Activated T-helper 1 cell treated with anti-CD3 and anti-CD28 coated beads, Interleukin-12 subunit alpha, Interleukin-12 subunit beta, Interleukin-2, Interleukin-4 antibody, amounts not matched to agents 30 ng/mL and 10 ng/mL and 1 ng/mL, durations not matched to agents 14 hours and 24 hours and 36 hours (primary cell): ENCODE measurements at regions of chr4 and their contacts with region 1.

Region 1: GRCh38 chr4:152779513-152780266 is at the starts of genes ARFIP1 and TIGD4:
- DNase-seq: peak; percentile 96
- H3K4me3 Mint-ChIP-seq: peak within 1 kb of the TSS; percentile 99
- H3K27ac Mint-ChIP-seq: peak within 1 kb of the TSS; percentile 94
- H3K4me1 Mint-ChIP-seq: peaks cover 44% of the 10 kb centered on the region
- H3K27me3 Mint-ChIP-seq: peaks cover 25% of the 10 kb centered on the region
- total RNA-seq, gene ARFIP1: 18.6 and 23.2 TPM in 2 replicates
- total RNA-seq, gene TIGD4: 0.24 and 0.57 TPM in 2 replicates

Region 2: GRCh38 chr4:151760712-151761527 is 1018.8 kb before region 1 on chr4 and contains the start of gene GATB:
- intact Hi-C with region 1: loop called (anchors 1 kb)
- DNase-seq: peak; percentile 88
- H3K4me3 Mint-ChIP-seq: peak within 1 kb of the TSS; percentile 98
- H3K27ac Mint-ChIP-seq: peak within 1 kb of the TSS; percentile 97
- H3K4me1 Mint-ChIP-seq: peaks cover 21% of the 10 kb centered on the region
- H3K27me3 Mint-ChIP-seq: peaks cover 6% of the 10 kb centered on the region
- total RNA-seq, gene GATB: 16.1 and 20.0 TPM in 2 replicates

Region 3: GRCh38 chr4:152485726-152486276 is 293.9 kb before region 1 on chr4:
- intact Hi-C with region 1: loop called (anchors 2 kb)
- DNase-seq: peak; percentile 60
- H3K4me3 Mint-ChIP-seq: peak overlapping the region; percentile 40
- H3K27ac Mint-ChIP-seq: peak overlapping the region; percentile 77
- H3K4me1 Mint-ChIP-seq: peaks cover 48% of the 10 kb centered on the region
- H3K27me3 Mint-ChIP-seq: no peaks in the 10 kb centered on the region

Region 4: DNA sequence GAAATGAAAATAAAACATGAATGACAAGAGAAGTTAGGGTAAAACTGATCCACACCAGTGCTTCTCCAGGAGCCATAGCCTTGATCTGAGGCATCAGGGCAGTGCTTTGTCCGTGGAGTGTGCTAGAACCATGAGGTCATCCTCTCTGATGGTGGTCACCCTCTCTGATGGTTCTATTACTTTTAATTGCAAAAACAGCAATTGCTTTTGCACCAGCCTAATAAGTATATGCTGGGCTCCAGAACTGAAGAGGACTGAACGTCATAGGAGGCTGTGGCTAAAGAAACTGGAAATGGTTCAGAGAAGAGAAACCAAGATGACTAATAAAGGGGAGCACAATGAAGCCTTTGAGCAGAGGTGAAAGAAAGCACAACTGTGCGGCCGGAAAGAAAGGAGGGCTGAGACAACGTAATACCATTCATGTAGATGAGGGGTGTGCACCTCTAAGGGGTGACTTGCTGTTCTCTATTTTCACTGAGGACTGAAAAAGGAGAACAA is 82.9 kb before region 1 on chr4:
- intact Hi-C with region 1: loop called (anchors 5 kb)
- DNase-seq: peak; percentile 64
- H3K4me3 Mint-ChIP-seq: no peak overlapping the region
- H3K27ac Mint-ChIP-seq: no peak overlapping the region
- H3K4me1 Mint-ChIP-seq: peaks cover 23% of the 10 kb centered on the region
- H3K27me3 Mint-ChIP-seq: peaks cover 13% of the 10 kb centered on the region

Region 5: GRCh38 chr4:152850377-152850776 is 70.7 kb after region 1 on chr4:
- intact Hi-C with region 1: loop called (anchors 2 kb)
- DNase-seq: no peak
- H3K4me3 Mint-ChIP-seq: no peak overlapping the region
- H3K27ac Mint-ChIP-seq: no peak overlapping the region
- H3K4me1 Mint-ChIP-seq: peaks cover 23% of the 10 kb centered on the region
- H3K27me3 Mint-ChIP-seq: no peaks in the 10 kb centered on the region

Region 6: DNA sequence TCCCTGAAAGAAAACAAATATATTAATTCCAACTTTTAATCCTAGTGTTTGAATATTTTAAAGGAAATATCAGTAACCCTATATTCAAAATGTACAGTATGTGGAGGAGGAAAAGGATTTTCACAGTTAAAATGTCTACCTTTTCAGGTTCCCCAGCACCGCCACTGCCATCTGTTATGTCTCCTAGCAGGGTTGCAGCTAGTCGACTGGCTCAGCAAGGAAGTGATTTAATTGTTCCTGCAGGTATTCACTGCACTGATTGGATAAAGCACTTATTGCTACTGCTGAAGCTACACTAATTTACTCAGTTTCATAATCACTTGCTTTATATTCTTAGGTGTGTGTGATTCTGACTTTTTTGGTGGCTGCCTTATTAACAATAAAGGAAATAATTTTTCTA is 90.9 kb after region 1 on chr4:
- intact Hi-C with region 1: no loop called
- DNase-seq: no peak
- H3K4me3 Mint-ChIP-seq: no peak overlapping the region
- H3K27ac Mint-ChIP-seq: no peak overlapping the region
- H3K4me1 Mint-ChIP-seq: no peaks in the 10 kb centered on the region
- H3K27me3 Mint-ChIP-seq: no peaks in the 10 kb centered on the region

Region 7: GRCh38 chr4:152983774-152984411 is 204.2 kb after region 1 on chr4:
- intact Hi-C with region 1: no loop called
- DNase-seq: no peak
- H3K4me3 Mint-ChIP-seq: no peak overlapping the region
- H3K27ac Mint-ChIP-seq: no peak overlapping the region
- H3K4me1 Mint-ChIP-seq: no peaks in the 10 kb centered on the region
- H3K27me3 Mint-ChIP-seq: peaks cover 11% of the 10 kb centered on the region

Region 8: DNA sequence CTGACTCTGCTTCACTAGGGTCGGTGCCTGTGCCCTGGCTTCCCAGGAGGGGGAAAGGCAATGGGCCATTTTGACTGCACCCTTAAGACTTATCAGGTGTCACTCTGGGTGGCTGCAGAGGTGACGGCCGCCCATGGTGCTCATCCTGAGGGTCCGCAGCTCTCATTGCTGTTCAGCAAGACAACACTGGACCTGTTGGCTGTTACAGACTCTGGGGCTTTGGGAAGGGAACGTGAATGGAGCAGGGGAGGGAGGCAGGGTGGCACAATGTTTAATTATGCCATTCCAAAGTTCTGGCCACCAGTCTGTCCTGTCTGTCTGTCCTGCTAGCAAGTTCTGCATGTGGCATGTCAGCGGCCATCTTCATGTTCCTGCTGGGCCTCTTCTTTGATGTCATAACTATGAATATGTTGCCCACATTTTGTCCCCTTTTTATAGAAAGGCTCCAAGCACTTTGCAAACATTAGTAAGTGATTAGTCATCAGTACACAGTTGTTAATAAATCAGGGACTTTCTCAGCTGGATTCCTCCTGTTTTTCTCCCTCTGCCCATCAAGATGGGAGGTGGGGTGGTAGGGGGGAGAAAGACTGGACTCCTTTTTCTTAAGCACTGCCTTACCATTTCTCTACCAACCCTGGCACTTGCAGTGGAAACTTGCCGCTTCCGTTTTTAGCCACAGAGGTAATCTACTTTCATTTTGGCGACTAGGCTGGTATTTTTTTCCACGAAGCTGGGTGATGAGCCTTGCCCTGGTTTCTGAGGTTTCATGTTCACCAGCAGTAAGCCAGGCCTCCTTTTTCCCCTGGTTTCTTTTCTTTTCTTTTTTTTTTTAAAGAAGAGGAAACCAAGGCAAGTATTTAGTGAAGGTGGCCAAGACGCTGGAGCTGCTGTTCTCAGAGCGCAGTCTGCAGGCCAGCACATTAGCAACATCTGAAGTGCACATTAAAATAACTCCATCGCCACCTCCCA is 335.9 kb after region 1 on chr4:
- intact Hi-C with region 1: loop called (anchors 2 kb)
- DNase-seq: peak; percentile 69
- H3K4me3 Mint-ChIP-seq: peak overlapping the region; percentile 56
- H3K27ac Mint-ChIP-seq: peak overlapping the region; percentile 80
- H3K4me1 Mint-ChIP-seq: no peaks in the 10 kb centered on the region
- H3K27me3 Mint-ChIP-seq: peaks cover 6% of the 10 kb centered on the region